ENCODE measurements at regions of chr11 and their contacts with region 1.

Region 1: GRCh38 chr11:1917671-1918516 is 1.6 kb upstream of the TNNT3 start:
- DNase-seq: peak; percentile 82
- ATAC-seq: peak; percentile 65

Region 2: GRCh38 chr11:1694064-1694845 is 223.6 kb before region 1 on chr11:
- intact Hi-C with region 1: loop called (anchors 5 kb)
- DNase-seq: peak; percentile 94
- ATAC-seq: peak; percentile 96

Region 3: DNA sequence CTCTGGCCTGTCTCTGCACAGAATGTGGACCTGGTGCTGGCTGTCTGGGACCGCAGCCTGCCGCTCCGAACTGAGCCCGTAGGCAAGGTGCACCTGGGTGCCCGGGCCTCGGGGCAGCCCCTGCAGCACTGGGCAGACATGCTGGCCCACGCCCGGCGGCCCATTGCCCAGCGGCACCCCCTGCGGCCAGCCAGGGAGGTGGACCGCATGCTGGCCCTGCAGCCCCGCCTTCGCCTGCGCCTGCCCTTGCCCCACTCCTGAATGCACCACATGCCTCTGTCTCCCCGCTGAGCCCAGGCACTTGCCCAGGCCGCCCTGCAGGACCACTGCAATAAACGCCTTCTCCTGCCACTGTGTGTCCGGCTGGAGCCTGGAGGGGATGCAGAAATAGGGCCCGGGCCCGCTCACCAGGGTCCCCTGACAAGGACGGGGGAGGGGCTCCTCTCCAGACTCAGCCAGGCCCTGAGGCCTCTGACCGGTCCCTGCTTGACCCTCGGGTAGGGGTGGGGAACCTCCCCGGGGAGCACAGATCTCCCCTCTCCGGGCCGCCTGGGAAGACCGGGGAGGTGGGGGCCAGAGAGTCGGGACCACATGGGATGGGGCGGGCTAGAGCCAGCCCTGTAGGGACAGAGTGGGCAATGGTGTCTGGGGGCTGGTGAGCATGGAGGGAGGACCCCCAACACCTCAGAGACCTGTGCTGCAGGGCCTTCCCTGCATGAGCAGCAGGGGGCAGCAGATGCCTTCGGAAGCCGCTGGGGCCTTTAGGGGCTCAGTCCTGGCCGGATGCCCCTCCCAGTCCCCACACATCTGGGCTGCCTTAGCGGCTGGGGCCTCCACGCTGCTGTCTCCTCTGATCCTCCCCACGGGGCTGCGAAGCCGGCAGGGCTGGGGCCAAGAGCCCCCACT is 80.5 kb before region 1 on chr11:
- intact Hi-C with region 1: loop called (anchors 2 kb)
- DNase-seq: peak; percentile 81
- ATAC-seq: peak; percentile 60

Region 4: GRCh38 chr11:1863352-1864216 is 54.3 kb before region 1 on chr11:
- intact Hi-C with region 1: no loop called
- DNase-seq: peak; percentile 91
- ATAC-seq: peak; percentile 26

Region 5: GRCh38 chr11:1882519-1883238 is 35.2 kb before region 1 on chr11:
- intact Hi-C with region 1: loop called (anchors 5 kb)
- DNase-seq: peak; percentile 93
- ATAC-seq: peak; percentile 67

Region 6: DNA sequence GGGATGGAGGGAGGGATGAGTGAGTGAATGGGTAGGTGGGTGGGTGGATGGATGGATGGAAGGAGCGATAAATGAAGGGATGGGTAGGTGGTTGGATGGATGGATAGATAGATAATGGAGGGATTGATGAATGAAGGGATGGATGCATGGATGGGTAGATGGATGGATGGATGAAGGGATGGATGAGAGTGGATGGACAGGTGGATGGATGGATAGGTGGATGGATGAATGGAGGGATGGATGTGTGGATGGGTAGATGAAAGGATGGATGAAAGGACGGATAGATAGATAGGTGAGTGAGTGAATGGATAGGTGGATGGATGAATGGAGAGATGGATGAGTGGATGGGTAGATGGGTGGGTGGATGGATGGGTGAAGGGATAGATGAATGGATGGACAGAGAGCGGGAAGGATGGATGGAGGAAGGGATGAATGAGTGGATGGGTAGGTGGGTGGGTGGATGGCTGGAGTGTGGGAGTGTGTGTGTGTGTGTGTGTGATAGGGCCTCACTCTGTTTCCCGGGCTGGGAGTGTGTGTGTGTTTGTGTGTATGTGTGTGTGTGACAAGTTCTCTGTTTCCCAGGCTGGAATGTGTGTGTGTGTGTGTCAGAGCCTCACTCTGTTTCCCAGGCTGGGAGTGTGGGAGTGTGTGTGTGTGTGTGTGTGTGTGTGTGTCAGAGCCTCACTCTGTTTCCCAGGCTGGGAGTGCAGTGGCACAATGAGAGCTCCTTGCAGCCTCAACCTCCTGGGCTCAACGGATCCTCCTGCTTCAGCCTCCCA is 24.1 kb before region 1 on chr11:
- intact Hi-C with region 1: loop called (anchors 1 kb)
- DNase-seq: peak; percentile 46
- ATAC-seq: no peak

Region 7: DNA sequence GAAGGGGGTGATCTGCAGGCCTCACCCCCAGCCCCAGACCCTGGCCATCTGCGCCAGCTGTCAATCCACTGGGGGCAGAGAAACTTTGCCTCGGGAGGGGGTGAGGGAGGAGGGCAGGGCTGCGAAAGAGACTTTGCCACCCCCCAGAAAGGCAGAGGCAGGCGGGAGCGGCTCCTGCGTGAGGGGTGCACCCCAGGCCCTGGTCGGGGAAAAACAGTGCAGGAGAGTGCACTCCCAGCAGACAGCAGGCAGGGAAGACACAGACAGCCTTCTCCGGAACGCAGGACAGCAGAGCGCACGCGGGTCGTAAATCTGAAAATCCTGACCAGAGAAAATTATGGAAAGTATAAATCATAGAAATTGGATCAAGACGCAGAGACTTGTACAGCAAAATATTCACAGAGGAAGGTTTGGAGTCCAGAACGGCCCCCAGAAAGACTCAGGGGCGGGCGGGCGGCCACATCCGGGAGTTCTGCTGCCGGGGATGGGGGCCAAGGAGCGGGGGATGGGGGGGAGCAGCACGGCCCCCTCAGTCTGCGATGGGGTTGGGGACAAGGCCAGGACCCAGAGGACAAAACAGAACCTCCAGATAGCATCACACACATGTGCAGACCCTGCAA is 21.2 kb after region 1 on chr11:
- intact Hi-C with region 1: loop called (anchors 1 kb)
- DNase-seq: peak; percentile 72
- ATAC-seq: no peak